ENCODE measurements at regions of chr9 and their contacts with region 1.

Region 1: GRCh38 chr9:135673941-135674340 is 10.8 kb downstream of the LCN9 start:
- DNase-seq: no peak
- H3K4me3 ChIP-seq: no peak overlapping the region
- H3K27ac ChIP-seq: no peak overlapping the region
- H3K4me1 ChIP-seq: no peaks in the 10 kb centered on the region
- H3K27me3 ChIP-seq: peaks cover 5% of the 10 kb centered on the region
- CTCF ChIP-seq: no peak

Region 2: DNA sequence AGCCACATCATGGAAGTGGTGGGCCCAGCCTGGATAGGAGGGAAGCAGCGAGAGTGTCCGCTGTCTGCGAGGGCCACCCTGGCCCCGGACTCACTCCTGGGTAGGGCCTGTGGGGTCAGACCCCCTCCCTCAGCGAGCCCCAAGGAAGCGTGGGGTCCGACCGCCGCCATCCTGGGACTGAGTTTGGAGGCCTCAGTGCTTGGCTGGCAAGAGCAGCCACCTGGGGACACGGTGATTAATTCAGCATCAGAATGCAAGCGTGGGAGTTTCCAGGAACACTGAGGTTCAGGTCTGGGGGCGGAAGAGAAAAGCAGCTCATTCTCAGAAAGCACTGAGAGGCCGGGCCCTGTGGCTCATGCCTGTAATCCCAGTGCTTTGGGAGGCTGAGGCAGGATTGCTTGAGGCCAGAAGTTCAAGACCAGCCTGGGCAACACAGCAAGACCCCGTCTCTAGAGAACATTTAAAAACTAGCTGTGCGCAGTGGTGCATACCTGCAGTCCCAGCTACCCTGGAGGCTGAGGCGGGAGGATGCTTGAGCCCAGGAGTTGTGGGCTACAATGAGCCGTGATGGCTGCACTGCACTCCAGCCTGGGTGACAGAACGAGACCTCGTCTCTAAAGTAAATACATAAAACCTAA is 251.7 kb after region 1 on chr9:
- CTCF ChIA-PET with region 1: interaction called, 15 read pairs
- POLR2A ChIA-PET with region 1: no interaction called
- intact Hi-C with region 1: no loop called
- DNase-seq: no peak
- H3K4me3 ChIP-seq: no peak overlapping the region
- H3K27ac ChIP-seq: no peak overlapping the region
- H3K4me1 ChIP-seq: no peaks in the 10 kb centered on the region
- H3K27me3 ChIP-seq: no peaks in the 10 kb centered on the region
- CTCF ChIP-seq: no peak

Region 3: DNA sequence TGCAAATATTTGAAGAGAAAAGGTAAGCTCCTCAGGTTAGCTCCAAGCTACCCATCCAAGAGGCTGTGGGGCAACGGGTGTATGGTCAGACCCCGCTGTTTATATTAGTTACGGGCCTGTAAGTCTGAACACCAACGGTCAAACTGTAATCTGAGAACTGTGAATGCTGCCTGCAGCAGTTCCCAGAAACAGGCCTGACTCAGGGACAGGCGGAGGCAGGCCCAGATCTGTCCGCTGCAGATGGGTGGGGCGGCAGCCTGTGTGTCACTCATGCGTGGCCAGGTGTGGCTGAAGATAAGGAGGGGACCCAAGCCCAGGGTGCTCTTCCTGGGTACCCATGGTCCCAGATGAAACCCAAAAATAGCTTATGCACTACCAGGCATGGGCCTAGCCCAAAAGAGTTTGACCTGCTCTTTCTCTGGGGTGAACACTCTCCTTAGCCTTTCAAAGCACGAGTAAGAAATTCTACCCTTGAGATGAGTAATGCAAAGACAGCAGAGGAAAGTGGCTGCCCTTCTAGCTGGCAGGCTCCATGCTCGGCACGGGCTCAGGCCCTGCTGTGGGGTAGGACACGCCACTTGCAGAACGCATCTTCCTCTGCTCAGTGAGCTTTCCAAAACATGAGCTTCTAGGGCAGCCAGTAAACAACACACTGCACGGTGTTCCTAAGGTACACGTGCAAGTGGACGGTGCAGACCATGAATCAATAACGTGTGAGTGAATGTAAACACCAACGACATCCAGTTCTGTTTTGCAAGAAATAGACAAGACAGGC is 278.1 kb after region 1 on chr9:
- CTCF ChIA-PET with region 1: no interaction called
- POLR2A ChIA-PET with region 1: no interaction called
- intact Hi-C with region 1: no loop called
- DNase-seq: no peak
- H3K4me3 ChIP-seq: no peak overlapping the region
- H3K27ac ChIP-seq: no peak overlapping the region
- H3K4me1 ChIP-seq: no peaks in the 10 kb centered on the region
- H3K27me3 ChIP-seq: no peaks in the 10 kb centered on the region
- CTCF ChIP-seq: no peak

Measured in A673 (cell line).